ENCODE measurements at regions of chr12 and their contacts with region 1.

Region 1: DNA sequence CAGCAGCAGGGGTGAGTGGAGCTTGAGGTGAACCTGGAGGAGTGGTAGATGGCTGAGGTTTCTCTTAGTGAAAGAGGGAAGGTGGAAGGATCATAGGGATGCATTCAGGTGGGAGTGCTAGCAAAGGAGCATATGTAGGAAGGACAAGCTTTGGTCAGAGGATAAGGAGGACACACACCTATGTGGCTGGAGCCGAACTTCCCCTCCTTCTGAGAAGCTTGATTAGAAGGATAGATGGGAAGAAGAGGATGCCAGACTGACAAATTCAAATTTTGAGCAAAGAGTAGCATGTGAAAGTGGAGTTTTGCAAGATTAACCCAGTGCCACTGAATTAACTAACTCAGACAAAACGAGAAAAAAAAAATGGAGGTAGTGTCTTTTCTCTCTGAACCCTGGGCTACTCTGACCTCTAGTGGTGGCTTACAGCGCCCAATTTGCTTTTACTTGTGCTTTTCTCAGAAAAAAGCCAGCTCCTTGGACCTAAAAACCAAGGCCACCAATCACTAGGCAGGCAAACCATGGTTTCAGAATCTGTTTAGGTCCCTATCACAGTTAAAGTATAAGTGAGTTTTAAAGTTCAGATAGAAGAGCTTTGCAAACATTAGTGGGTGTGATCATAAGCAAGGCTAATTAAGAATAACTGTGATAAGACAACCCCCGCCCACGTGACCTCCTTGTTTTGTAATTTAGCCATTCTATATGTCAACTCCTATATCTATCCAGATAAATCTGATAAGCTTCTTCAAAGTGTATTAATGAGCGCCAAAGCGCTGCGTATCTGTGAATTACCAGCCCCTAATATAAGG is 15.5 kb downstream of the EMP1 start:
- DNase-seq: peak; percentile 84
- ATAC-seq: peak; percentile 68
- H3K4me3 Mint-ChIP-seq: no peak overlapping the region
- H3K27ac Mint-ChIP-seq: peak overlapping the region; percentile 9
- H3K4me1 Mint-ChIP-seq: peaks cover 19% of the 10 kb centered on the region
- H3K27me3 Mint-ChIP-seq: peaks cover 3% of the 10 kb centered on the region
- CTCF ChIP-seq: peak; percentile 93

Region 2: DNA sequence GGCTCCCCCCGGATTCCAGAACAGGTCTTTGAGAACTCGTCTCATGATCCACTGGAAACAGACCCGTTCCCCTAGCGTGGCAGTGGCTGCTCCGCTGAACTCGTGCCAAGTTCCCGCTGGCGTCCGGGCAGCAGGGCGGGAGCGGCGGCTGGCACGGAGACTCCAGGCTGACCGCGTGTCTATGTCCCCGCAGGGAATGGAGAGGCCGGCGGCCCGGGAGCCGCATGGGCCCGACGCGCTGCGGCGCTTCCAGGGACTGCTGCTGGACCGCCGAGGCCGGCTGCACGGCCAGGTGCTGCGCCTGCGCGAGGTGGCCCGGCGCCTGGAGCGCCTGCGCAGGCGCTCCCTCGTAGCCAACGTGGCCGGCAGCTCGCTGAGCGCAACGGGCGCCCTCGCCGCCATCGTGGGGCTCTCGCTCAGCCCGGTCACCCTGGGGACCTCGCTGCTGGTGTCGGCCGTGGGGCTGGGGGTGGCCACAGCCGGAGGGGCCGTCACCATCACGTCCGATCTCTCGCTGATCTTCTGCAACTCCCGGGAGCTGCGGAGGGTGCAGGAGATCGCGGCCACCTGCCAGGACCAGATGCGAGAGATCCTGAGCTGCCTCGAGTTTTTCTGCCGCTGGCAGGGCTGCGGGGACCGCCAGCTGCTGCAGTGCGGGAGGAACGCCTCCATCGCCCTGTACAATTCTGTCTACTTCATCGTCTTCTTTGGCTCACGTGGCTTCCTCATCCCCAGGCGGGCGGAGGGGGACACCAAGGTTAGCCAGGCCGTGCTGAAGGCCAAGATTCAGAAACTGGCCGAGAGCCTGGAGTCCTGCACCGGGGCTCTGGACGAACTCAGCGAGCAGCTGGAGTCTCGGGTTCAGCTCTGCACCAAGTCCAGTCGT is 425.1 kb before region 1 on chr12:
- CTCF ChIA-PET with region 1: interaction called, 12 read pairs
- POLR2A ChIA-PET with region 1: no interaction called
- intact Hi-C with region 1: no loop called
- DNase-seq: peak; percentile 67
- ATAC-seq: peak; percentile 88
- H3K4me3 Mint-ChIP-seq: peak overlapping the region; percentile 86
- H3K27ac Mint-ChIP-seq: peak overlapping the region; percentile 89
- H3K4me1 Mint-ChIP-seq: peaks cover 36% of the 10 kb centered on the region
- H3K27me3 Mint-ChIP-seq: no peaks in the 10 kb centered on the region
- CTCF ChIP-seq: no peak

Region 3: DNA sequence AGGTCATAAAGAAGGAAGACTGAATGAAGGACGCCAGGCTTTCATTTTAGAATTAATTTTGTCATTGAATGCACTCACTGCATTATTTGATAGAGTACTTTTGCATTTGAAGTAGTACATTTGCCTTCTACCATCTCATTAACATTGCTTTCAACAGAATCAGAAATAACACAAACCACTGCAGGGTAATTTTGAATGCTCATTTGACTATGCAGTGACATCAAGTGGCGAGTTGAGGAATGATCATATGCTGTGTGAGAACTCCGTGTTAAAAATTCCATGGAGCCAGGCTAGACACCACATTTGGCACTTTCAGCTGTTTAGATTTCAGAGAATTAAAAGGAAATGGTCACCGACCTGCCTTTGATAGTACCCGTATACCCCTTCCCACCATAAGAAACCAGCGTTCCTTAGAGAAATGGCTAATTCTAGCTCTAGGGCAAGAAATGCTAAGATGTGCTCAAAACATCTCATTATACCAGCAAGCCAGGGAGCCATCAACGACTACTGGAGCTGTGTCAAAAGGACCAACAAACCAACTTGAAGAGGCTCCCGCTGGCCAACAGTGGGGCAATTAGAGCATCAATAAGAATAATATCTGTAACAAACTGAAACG is 228.5 kb before region 1 on chr12:
- CTCF ChIA-PET with region 1: interaction called, 21 read pairs
- POLR2A ChIA-PET with region 1: no interaction called
- intact Hi-C with region 1: no loop called
- DNase-seq: no peak
- ATAC-seq: no peak
- H3K4me3 Mint-ChIP-seq: no peak overlapping the region
- H3K27ac Mint-ChIP-seq: no peak overlapping the region
- H3K4me1 Mint-ChIP-seq: no peaks in the 10 kb centered on the region
- H3K27me3 Mint-ChIP-seq: no peaks in the 10 kb centered on the region
- CTCF ChIP-seq: peak; percentile 59

Region 4: GRCh38 chr12:13044002-13044905 is 167.8 kb before region 1 on chr12 and contains the start of gene FAM234B:
- CTCF ChIA-PET with region 1: interaction called, 40 read pairs
- POLR2A ChIA-PET with region 1: no interaction called
- intact Hi-C with region 1: no loop called
- DNase-seq: peak; percentile 81
- ATAC-seq: peak; percentile 95
- H3K4me3 Mint-ChIP-seq: peak within 1 kb of the TSS; percentile 77
- H3K27ac Mint-ChIP-seq: peak within 1 kb of the TSS; percentile 35
- H3K4me1 Mint-ChIP-seq: peaks cover 14% of the 10 kb centered on the region
- H3K27me3 Mint-ChIP-seq: no peaks in the 10 kb centered on the region
- CTCF ChIP-seq: peak; percentile 23
- total RNA-seq, gene FAM234B: 10.0 to 10.7 TPM

Region 5: GRCh38 chr12:13094347-13094746 is 117.7 kb before region 1 on chr12:
- CTCF ChIA-PET with region 1: interaction called, 150 read pairs
- POLR2A ChIA-PET with region 1: interaction called, 3 read pairs
- intact Hi-C with region 1: loop called (anchors 1 kb)
- DNase-seq: no peak
- ATAC-seq: no peak
- H3K4me3 Mint-ChIP-seq: no peak overlapping the region
- H3K27ac Mint-ChIP-seq: no peak overlapping the region
- H3K4me1 Mint-ChIP-seq: peaks cover 28% of the 10 kb centered on the region
- H3K27me3 Mint-ChIP-seq: no peaks in the 10 kb centered on the region
- CTCF ChIP-seq: no peak

Region 6: DNA sequence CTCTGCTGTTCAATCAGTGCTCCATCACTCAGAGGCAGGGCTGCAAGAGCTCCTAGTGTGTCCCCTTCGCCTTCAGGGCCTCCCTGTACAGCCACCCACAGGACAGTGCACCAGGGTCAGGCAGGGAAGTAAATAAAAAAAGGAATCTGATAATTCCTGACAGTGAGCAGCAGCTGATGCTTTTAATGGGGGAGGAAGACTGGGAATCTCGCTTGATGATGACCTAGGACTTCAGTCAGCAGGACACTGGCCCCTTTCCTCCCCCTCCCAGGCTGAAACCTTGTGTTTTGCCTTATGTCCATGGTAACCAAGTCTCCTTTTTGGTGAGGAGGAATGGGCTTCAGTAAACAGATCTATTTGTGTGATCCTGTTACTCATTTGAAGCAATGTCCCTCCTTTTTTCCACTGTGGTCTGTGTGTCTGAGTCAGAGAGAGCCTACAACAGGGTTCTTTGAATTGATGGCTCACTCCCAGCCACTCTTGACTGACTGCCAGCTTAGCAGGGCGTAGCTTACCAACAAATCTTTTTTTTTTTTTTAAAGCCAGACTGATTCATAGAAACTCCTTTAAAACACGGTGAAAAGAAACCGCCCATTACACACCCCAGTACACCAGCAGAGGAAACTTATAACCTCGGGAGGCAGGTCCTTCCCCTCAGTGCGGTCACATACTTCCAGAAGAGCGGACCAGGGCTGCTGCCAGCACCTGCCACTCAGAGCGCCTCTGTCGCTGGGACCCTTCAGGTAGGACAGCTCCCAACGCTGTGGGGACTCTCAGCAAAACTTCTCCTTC is 15.7 kb before region 1 on chr12 and contains the start of gene EMP1:
- CTCF ChIA-PET with region 1: interaction called, 32 read pairs
- POLR2A ChIA-PET with region 1: interaction called, 3 read pairs
- intact Hi-C with region 1: no loop called
- DNase-seq: peak; percentile 93
- ATAC-seq: peak; percentile 98
- H3K4me3 Mint-ChIP-seq: peak within 1 kb of the TSS; percentile 80
- H3K27ac Mint-ChIP-seq: peak within 1 kb of the TSS; percentile 83
- H3K4me1 Mint-ChIP-seq: peaks cover 27% of the 10 kb centered on the region
- H3K27me3 Mint-ChIP-seq: peaks cover 7% of the 10 kb centered on the region
- CTCF ChIP-seq: no peak
- total RNA-seq, gene EMP1: 3.1 to 3.6 TPM

Region 7: GRCh38 chr12:13255792-13256691 is 44.0 kb after region 1 on chr12:
- CTCF ChIA-PET with region 1: interaction called, 18 read pairs
- POLR2A ChIA-PET with region 1: no interaction called
- intact Hi-C with region 1: no loop called
- DNase-seq: peak; percentile 85
- ATAC-seq: peak; percentile 100
- H3K4me3 Mint-ChIP-seq: no peak overlapping the region
- H3K27ac Mint-ChIP-seq: no peak overlapping the region
- H3K4me1 Mint-ChIP-seq: peaks cover 3% of the 10 kb centered on the region
- H3K27me3 Mint-ChIP-seq: peaks cover 1% of the 10 kb centered on the region
- CTCF ChIP-seq: peak; percentile 95

Region 8: GRCh38 chr12:13289653-13290289 is 77.7 kb after region 1 on chr12:
- CTCF ChIA-PET with region 1: no interaction called
- POLR2A ChIA-PET with region 1: no interaction called
- intact Hi-C with region 1: no loop called
- DNase-seq: no peak
- ATAC-seq: no peak
- H3K4me3 Mint-ChIP-seq: no peak overlapping the region
- H3K27ac Mint-ChIP-seq: no peak overlapping the region
- H3K4me1 Mint-ChIP-seq: no peaks in the 10 kb centered on the region
- H3K27me3 Mint-ChIP-seq: peaks cover 7% of the 10 kb centered on the region
- CTCF ChIP-seq: no peak